Activated CD8-positive, alpha-beta memory T cell treated with anti-CD3 and anti-CD28 coated beads, Interleukin-2, amount 10 ng/mL, durations not matched to agents 7 days and 5 days (primary cell): ENCODE measurements at regions of chr1 and their contacts with region 1.

Region 1: GRCh38 chr1:206803221-206803730 is 31.0 kb upstream of the IL10 start:
- DNase-seq: peak; percentile 90
- ATAC-seq: peak; percentile 91
- H3K4me3 Mint-ChIP-seq: no peak overlapping the region
- H3K27ac Mint-ChIP-seq: peak overlapping the region; percentile 86
- H3K4me1 Mint-ChIP-seq: peaks cover 89% of the 10 kb centered on the region
- H3K27me3 Mint-ChIP-seq: peaks cover 27% of the 10 kb centered on the region

Region 2: GRCh38 chr1:206766251-206766856 is 36.9 kb before region 1 on chr1:
- CTCF ChIA-PET with region 1: interaction called, 61 read pairs
- DNase-seq: peak; percentile 91
- ATAC-seq: peak; percentile 68
- H3K4me3 Mint-ChIP-seq: peak overlapping the region; percentile 13
- H3K27ac Mint-ChIP-seq: peak overlapping the region; percentile 80
- H3K4me1 Mint-ChIP-seq: peaks cover 64% of the 10 kb centered on the region
- H3K27me3 Mint-ChIP-seq: peaks cover 34% of the 10 kb centered on the region

Region 3: GRCh38 chr1:206816390-206817287 is 13.4 kb after region 1 on chr1:
- CTCF ChIA-PET with region 1: interaction called, 43 read pairs
- DNase-seq: no peak
- ATAC-seq: peak; percentile 93
- H3K4me3 Mint-ChIP-seq: peak overlapping the region; percentile 57
- H3K27ac Mint-ChIP-seq: peak overlapping the region; percentile 88
- H3K4me1 Mint-ChIP-seq: peaks cover 39% of the 10 kb centered on the region
- H3K27me3 Mint-ChIP-seq: no peaks in the 10 kb centered on the region